Activated CD4-positive, alpha-beta T cell treated with anti-CD3 and anti-CD28 coated beads, Interleukin-2, amount 10 ng/mL, durations not matched to agents 24 days and 14 days (primary cell): ENCODE measurements at regions of chr2 and their contacts with region 1.

Region 1: DNA sequence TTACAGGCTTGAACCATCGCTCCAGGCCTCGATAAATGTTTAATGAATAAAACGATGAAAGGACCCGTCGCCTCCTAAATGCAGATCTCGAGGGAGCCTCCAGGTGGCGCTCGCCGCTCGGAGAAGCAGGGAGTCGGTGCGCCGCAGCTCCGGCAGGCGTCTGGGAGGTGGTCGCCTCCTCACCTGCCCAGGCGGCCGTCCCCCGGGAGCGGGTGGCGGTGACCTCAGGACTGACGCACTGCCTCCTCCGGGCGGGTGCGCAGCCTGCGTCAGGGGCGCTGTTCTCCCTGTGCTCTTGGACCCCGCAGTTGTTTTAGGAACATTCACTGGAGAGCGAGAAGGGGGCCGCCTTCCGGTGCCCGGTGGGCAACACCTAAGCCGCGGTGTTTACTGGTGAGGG is 38.6 kb upstream of the POLE4 start:
- DNase-seq: peak; percentile 91
- H3K4me3 Mint-ChIP-seq: peak overlapping the region; percentile 36
- H3K27ac Mint-ChIP-seq: no peak overlapping the region
- H3K4me1 Mint-ChIP-seq: peaks cover 10% of the 10 kb centered on the region
- H3K27me3 Mint-ChIP-seq: peaks cover 22% of the 10 kb centered on the region

Region 2: GRCh38 chr2:73896362-73897239 is 1023.2 kb before region 1 on chr2:
- intact Hi-C with region 1: no loop called
- DNase-seq: peak; percentile 84
- H3K4me3 Mint-ChIP-seq: peak overlapping the region; percentile 51
- H3K27ac Mint-ChIP-seq: peak overlapping the region; percentile 85
- H3K4me1 Mint-ChIP-seq: peaks cover 35% of the 10 kb centered on the region
- H3K27me3 Mint-ChIP-seq: no peaks in the 10 kb centered on the region

Region 3: DNA sequence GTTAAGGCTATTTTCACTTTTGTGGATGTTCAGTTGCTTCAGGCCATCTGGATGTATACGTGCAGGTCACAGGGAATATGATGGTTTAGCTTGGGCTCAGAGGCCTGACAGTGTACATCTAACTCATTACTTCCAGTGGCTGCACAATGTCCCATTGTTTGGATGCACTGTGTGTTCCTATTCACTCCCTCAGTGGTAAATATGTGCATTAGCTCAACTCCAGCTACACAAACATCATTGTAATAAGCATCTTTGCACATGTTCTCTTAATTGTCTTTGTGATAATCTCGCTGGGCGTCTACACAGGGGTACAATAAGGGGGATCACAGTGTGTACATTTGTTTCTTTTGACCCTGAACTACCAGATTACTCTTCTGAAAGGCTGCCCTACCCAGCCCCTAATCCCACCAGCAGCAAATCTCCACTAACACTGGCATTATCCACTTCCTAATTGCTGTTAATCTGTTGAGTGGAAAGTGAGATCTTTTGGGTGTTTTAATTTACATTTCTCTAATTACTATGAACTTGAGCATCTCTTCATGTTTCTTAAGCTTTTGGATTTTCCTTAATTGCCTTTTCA is 17.5 kb before region 1 on chr2:
- intact Hi-C with region 1: no loop called
- DNase-seq: no peak
- H3K4me3 Mint-ChIP-seq: no peak overlapping the region
- H3K27ac Mint-ChIP-seq: no peak overlapping the region
- H3K4me1 Mint-ChIP-seq: no peaks in the 10 kb centered on the region
- H3K27me3 Mint-ChIP-seq: peaks cover 2% of the 10 kb centered on the region

Region 4: DNA sequence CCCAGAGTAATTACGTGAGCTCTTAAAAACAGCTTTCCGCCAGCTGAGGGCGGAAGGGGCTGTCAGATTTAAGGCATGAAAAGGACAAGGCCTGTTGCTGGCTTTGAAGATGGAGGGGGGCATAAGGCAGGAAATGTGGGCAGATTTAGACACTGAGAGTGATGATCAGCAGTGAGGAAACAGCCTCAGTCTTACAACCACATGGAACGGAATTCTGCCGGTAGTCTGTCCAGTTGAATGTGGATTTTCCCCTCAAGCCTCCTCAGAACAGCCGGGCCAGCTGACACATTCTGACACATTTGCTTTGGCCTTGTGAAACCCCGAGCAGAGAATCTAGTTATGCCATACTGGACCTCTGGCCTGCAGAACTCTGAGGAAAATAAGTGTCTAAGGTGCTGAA is 55.2 kb after region 1 on chr2:
- intact Hi-C with region 1: no loop called
- DNase-seq: no peak
- H3K4me3 Mint-ChIP-seq: no peak overlapping the region
- H3K27ac Mint-ChIP-seq: no peak overlapping the region
- H3K4me1 Mint-ChIP-seq: no peaks in the 10 kb centered on the region
- H3K27me3 Mint-ChIP-seq: no peaks in the 10 kb centered on the region

Region 5: GRCh38 chr2:75064691-75065396 is 145.0 kb after region 1 on chr2:
- intact Hi-C with region 1: loop called (anchors 5 kb)
- DNase-seq: peak; percentile 84
- H3K4me3 Mint-ChIP-seq: no peak overlapping the region
- H3K27ac Mint-ChIP-seq: no peak overlapping the region
- H3K4me1 Mint-ChIP-seq: no peaks in the 10 kb centered on the region
- H3K27me3 Mint-ChIP-seq: peaks cover 2% of the 10 kb centered on the region

Region 6: DNA sequence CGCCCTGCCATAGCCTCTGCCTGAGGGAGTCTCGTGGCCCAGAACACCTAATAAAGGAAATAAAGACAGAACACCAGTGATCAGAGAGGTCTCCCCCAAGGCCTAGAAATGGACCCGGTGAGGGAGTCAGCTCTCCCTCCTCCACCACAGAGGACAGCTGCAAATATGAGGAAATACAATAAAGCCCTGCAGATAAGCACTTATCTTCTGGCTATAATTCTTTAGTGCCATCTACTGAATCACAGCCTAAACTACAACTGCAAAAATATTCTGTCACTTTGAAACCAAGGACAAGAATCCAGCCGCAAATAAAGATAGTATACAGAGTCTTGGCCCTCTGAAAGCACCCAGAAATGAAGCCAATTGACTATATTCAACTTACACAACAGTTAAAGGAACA is 321.9 kb after region 1 on chr2:
- intact Hi-C with region 1: loop called (anchors 2 kb)
- DNase-seq: no peak
- H3K4me3 Mint-ChIP-seq: no peak overlapping the region
- H3K27ac Mint-ChIP-seq: no peak overlapping the region
- H3K4me1 Mint-ChIP-seq: no peaks in the 10 kb centered on the region
- H3K27me3 Mint-ChIP-seq: peaks cover 3% of the 10 kb centered on the region

Region 7: GRCh38 chr2:75403991-75404428 is 484.2 kb after region 1 on chr2:
- intact Hi-C with region 1: loop called (anchors 1 kb)
- DNase-seq: no peak
- H3K4me3 Mint-ChIP-seq: no peak overlapping the region
- H3K27ac Mint-ChIP-seq: no peak overlapping the region
- H3K4me1 Mint-ChIP-seq: no peaks in the 10 kb centered on the region
- H3K27me3 Mint-ChIP-seq: peaks cover 10% of the 10 kb centered on the region

Region 8: GRCh38 chr2:75627895-75628504 is 708.2 kb after region 1 on chr2:
- intact Hi-C with region 1: loop called (anchors 10 kb)
- DNase-seq: peak; percentile 86
- H3K4me3 Mint-ChIP-seq: no peak overlapping the region
- H3K27ac Mint-ChIP-seq: no peak overlapping the region
- H3K4me1 Mint-ChIP-seq: no peaks in the 10 kb centered on the region
- H3K27me3 Mint-ChIP-seq: peaks cover 22% of the 10 kb centered on the region